ENCODE measurements at regions of chr12 and their contacts with region 1.

Region 1: DNA sequence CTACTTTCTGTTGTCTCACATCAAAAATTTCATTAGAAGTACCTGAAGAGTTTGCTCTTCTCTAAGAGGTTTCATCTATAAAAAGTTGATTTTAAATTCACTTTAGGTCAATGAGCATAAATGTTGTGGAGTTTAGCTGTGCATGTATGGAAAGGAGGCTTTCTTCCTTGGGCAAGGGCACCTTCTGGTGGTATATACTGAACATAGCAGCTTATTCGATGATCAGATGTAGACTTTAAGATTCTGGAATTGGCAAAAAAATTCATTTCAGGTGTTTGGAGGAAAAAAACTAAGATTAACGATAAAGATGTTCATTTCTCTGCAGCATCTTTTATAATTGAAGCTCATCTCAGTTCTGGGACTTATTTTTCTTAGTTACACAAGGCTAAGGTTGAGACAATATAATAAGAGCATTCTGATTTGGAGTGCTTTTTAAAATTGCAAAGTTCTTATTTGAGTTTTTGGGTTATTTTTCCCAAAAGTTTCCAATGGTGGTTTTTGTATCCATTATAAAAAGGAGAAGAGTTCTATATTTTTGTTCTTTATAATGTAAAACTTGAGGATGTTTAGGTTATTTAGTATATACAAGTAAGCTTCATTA is 46.8 kb downstream of the TMEM117 start:
- DNase-seq: peak; percentile 53
- H3K27ac ChIP-seq: no peak overlapping the region
- CTCF ChIP-seq: peak; percentile 89

Region 2: GRCh38 chr12:43766291-43766690 is 116.4 kb before region 1 on chr12:
- CTCF ChIA-PET with region 1: interaction called, 10 read pairs
- POLR2A ChIA-PET with region 1: no interaction called
- DNase-seq: no peak
- H3K27ac ChIP-seq: no peak overlapping the region
- CTCF ChIP-seq: no peak

Region 3: GRCh38 chr12:43776498-43776897 is 106.2 kb before region 1 on chr12:
- CTCF ChIA-PET with region 1: interaction called, 24 read pairs
- POLR2A ChIA-PET with region 1: no interaction called
- DNase-seq: peak; percentile 24
- H3K27ac ChIP-seq: no peak overlapping the region
- CTCF ChIP-seq: peak; percentile 37; the same call in 1 of the 2 replicates

Region 4: DNA sequence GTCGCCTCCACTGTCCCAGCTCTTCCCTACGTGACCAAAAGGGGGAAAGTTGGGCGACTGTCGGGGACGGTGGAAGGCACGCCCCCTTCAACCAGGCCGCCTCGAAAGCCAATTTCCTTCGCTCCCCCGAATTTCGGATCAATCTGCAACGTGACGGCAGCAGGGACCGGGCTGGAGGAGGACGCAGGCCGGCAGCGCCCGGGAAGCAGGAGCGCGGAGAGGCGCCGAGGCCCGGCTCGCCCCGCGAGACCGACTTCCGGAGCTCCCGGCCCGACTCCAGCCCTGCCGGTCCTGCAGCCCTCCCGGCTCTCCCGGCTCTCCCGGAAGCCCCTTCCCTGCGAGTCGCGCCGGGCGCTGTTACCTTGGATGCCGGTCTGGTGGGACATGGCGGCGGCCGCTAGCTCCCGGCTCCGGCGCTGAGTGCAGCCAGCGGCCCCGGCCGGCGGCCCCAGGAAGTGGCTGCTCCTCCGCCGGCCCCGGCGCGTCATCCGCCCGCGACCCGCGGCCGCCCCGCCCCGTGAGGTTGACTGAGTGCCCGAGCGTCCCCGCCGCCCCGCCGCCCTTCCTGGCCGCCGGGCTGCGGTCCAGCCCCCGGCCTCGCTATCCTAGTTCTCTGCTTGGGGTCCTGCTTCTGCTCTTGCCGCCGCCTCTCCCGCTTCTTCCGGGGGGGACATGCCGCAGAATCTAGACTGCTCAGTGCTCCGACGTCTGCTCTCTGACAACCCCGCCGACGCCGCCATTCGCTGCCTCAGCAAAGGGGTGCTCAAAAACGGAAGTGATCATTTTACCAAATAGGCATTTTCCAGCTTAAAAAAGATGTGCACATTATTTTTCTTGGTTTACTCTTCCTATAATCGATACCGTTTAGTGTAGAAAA is 76.6 kb before region 1 on chr12 and contains the start of gene TWF1:
- CTCF ChIA-PET with region 1: interaction called, 10 read pairs
- POLR2A ChIA-PET with region 1: interaction called, 3 read pairs
- DNase-seq: peak; percentile 75
- H3K27ac ChIP-seq: peak within 1 kb of the TSS; percentile 90
- CTCF ChIP-seq: peak; percentile 14

Measured in RWPE1 (cell line).